BJ (cell line): ENCODE measurements at regions of chr1 and their contacts with region 1.

Region 1: GRCh38 chr1:155989242-155990004 is 11.1 kb upstream of the ARHGEF2 start:
- DNase-seq: no peak
- H3K4me3 ChIP-seq: 0 out of 2 replicates have a peak overlapping the region, but pooled peaks have one; percentile 4
- H3K27me3 ChIP-seq: no peaks in the 10 kb centered on the region
- CTCF ChIP-seq: peak; percentile 98

Region 2: GRCh38 chr1:155934097-155934935 is 55.1 kb before region 1 on chr1 and contains the start of gene KHDC4:
- CTCF ChIA-PET with region 1: interaction called, 57 read pairs
- POLR2A ChIA-PET with region 1: no interaction called
- DNase-seq: peak; percentile 98
- H3K4me3 ChIP-seq: peak within 1 kb of the TSS; percentile 85
- H3K27me3 ChIP-seq: no peaks in the 10 kb centered on the region
- CTCF ChIP-seq: peak; percentile 29; the same call in 1 of the 2 replicates
- polyA plus RNA-seq, gene KHDC4: 39.0 and 39.8 TPM in 2 replicates

Region 3: DNA sequence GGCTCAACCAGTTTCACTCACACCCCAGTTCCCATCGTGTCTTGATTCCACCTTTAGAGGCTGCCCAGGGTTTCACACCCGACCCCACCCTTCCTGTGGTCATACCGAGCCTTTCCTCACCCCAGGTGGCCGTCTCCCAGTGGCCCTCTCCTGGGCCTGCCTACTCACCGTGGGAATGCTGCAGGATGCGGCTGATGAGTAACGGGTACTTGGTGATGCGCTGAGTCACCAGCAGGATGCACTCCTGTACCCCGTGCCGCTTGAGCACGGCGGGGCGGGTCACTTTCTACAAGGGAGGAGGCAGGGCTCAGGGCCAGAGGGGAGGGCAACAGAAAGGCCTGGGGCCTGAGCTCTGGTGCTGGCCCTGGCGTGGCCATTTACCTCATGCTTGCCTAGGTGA is 27.5 kb before region 1 on chr1:
- CTCF ChIA-PET with region 1: interaction called, 13 read pairs
- POLR2A ChIA-PET with region 1: no interaction called
- DNase-seq: peak; percentile 74
- H3K4me3 ChIP-seq: no peak overlapping the region
- H3K27me3 ChIP-seq: no peaks in the 10 kb centered on the region
- CTCF ChIP-seq: peak; percentile 47

Region 4: GRCh38 chr1:155978325-155978972 is 11.0 kb before region 1 on chr1 and contains the start of gene ARHGEF2:
- CTCF ChIA-PET with region 1: interaction called, 23 read pairs
- POLR2A ChIA-PET with region 1: no interaction called
- DNase-seq: no peak
- H3K4me3 ChIP-seq: peak within 1 kb of the TSS; percentile 80
- H3K27me3 ChIP-seq: no peaks in the 10 kb centered on the region
- CTCF ChIP-seq: peak; percentile 40
- polyA plus RNA-seq, gene ARHGEF2: 130 and 213 TPM in 2 replicates

Region 5: DNA sequence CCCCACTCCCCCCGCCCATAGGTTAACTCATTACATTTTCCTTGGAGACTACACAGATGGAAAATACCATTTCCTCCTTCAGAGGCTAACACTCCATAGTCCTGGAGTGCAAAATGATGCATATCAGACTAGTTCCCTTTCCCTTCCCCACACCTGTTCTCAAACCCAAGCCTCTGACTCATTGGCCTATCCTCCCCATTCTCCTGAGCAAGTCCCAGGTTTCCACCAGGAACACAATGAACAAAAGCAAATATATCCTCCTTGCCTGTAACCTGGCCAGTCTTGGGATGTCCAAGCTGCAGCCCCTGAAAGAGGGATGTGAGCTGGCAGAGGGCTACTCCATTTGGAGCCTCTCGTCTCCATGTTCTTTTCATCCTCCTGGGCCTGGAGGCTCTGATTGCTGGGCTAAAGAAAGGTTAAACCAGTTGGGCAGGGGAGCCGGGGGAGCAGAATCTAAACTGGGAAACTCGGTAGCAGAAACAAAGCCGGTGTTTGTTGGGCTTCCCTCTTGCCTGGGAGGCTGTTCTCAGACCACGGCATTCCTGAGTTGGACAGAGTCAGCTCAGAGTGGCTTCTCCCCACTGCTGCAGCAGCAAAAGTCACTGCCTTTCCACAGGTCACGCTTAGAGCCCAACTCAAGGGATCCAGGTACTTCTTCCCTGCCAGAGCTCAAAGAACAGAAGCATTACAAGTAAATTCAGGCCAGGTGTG is 17.4 kb after region 1 on chr1:
- CTCF ChIA-PET with region 1: interaction called, 24 read pairs
- POLR2A ChIA-PET with region 1: interaction called, 3 read pairs
- DNase-seq: no peak
- H3K4me3 ChIP-seq: no peak overlapping the region
- H3K27me3 ChIP-seq: no peaks in the 10 kb centered on the region
- CTCF ChIP-seq: no peak